ENCODE measurements at regions of chr11 and their contacts with region 1.

Region 1: GRCh38 chr11:76807206-76807875 is 24.2 kb downstream of the TSKU start:
- DNase-seq: peak; percentile 56 to 78
- H3K4me3 ChIP-seq: peak overlapping the region; percentile 12; the same call in 1 of the 2 replicates
- H3K27ac ChIP-seq: no peak overlapping the region
- H3K4me1 ChIP-seq: peaks cover 15% of the 10 kb centered on the region
- H3K27me3 ChIP-seq: no peaks in the 10 kb centered on the region
- CTCF ChIP-seq: peak; percentile 89

Region 2: DNA sequence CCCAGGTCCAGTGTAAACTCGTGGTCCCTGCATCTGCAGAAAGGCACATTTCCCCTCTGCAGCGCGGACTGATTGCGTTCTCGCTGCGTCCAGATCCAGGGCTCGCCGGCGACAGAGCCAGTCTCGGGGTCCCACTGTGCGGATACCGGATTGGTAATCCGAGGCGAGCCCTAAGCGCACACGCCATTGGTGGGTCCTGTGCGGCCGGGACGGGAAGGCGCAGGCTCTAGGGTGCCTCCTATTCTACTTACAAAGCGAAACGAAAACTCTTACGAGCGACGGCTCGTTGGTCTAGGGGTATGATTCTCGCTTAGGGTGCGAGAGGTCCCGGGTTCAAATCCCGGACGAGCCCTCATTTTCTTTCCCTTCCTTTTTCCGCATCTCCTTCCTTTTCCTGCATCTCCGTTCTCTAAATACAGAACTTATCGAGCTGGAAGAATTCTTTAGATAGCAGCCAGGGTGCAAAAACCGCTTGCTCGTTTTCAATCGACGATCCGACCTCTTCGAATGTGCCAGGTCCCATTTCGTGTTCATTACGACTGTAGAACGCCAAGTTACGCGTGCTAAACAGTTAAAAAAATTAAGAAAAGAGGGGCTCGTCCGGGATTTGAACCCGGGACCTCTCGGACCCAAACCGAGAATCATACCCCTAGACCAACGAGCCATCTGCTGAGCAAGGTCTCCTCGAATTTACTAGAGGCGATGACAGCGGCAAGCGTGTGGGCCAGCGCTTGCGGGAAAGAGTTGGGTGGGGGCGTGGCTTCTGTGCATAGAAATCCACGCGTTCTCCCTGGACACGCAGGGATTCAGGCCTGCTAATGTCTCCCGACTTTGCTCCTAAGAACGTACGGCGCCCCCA is 571.9 kb before region 1 on chr11:
- CTCF ChIA-PET with region 1: interaction called, 16 read pairs
- POLR2A ChIA-PET with region 1: no interaction called
- intact Hi-C with region 1: no loop called
- DNase-seq: peak; percentile 86 to 92
- H3K4me3 ChIP-seq: peak overlapping the region; percentile 66
- H3K27ac ChIP-seq: peak overlapping the region; percentile 48
- H3K4me1 ChIP-seq: peaks cover 14% of the 10 kb centered on the region
- H3K27me3 ChIP-seq: no peaks in the 10 kb centered on the region
- CTCF ChIP-seq: no peak

Region 3: GRCh38 chr11:76734456-76735420 is 72.6 kb before region 1 on chr11:
- CTCF ChIA-PET with region 1: interaction called, 6 read pairs
- POLR2A ChIA-PET with region 1: no interaction called
- intact Hi-C with region 1: loop called (anchors 1 kb)
- DNase-seq: no peak
- H3K4me3 ChIP-seq: no peak overlapping the region
- H3K27ac ChIP-seq: no peak overlapping the region
- H3K4me1 ChIP-seq: no peaks in the 10 kb centered on the region
- H3K27me3 ChIP-seq: no peaks in the 10 kb centered on the region
- CTCF ChIP-seq: no peak

Region 4: DNA sequence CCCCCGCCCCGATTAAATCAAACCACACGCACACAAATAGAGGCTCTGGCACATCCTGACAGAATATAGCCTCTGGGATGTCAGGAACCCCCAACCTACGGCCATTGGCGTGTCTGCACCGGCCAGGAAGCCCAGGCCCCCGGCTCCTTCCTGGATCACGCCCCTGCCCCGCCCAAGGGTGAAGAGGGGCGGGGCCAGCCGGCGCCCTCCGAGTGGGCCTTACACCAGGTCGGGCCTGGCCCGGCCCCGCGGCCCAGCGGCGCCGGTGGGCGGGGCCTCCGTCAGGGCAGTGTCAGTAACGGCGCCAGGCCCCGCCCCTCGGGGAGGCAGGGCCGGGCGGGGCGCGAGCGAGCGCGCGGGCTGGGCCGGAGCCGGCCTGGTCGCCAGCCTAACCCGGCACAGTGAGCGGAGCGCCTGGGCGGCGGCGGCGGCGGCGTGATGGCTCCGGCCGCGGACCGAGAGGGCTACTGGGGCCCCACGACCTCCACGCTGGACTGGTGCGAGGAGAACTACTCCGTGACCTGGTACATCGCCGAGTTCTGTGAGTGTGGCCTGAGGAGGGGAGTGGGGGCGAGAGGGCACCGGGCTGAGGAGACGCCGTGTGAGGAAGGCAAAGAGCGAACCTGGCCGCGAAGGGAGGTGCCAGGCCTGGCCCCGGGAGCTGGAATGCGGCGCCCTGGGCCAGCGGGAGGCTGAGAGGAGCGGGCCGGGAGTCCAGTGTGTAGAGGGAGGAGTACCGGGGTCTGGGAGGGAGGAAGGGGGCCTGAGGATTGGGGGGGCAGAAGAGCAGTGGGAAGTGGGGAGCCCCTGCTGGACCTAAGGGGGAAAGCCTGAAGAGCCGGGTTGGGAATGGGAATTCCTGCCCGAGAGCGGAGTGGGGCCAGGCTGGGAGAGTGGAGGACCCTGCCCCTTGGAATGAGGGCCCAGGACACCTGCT is 53.5 kb after region 1 on chr11 and contains the start of gene ACER3:
- CTCF ChIA-PET with region 1: no interaction called
- POLR2A ChIA-PET with region 1: interaction called, 5 read pairs
- intact Hi-C with region 1: loop called (anchors 5 kb)
- DNase-seq: peak; percentile 69 to 96
- H3K4me3 ChIP-seq: peak within 1 kb of the TSS; percentile 94
- H3K27ac ChIP-seq: no peak within 1 kb of the TSS
- H3K4me1 ChIP-seq: peaks cover 20% of the 10 kb centered on the region
- H3K27me3 ChIP-seq: no peaks in the 10 kb centered on the region
- CTCF ChIP-seq: peak; percentile 45; the same call in 1 of the 2 replicates
- total RNA-seq, gene ACER3: 15.8 and 21.3 TPM in 2 replicates

Region 5: DNA sequence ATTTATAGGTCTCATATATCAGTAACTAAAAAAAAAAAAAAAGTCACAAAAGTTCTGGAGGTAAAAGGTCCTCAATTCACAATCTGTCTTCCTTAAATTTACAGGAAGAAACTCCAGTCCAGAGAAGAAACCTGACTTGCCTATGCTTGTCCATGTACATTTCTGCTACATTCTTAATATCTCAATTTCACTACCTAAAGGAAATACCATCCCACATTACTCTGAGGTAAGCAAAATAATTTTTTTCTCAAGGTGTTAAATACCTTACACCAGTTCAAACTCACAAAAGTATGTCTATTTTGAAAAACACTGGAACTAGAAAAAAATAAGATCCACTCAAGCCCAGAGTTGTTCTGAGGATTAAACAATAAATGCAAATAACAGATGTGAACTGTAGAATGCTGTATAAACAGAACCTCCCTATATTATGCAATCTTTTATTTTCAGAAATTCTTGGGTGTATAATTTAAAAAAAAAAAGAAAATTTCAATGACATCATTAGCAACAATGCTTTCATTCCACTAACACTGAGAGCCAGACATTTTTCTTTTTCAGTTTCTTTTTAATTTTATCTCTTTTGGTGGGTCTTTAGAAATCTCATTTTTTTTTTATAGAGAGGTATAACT is 544.1 kb after region 1 on chr11:
- CTCF ChIA-PET with region 1: interaction called, 15 read pairs
- POLR2A ChIA-PET with region 1: no interaction called
- intact Hi-C with region 1: no loop called
- DNase-seq: no peak
- H3K4me3 ChIP-seq: no peak overlapping the region
- H3K27ac ChIP-seq: no peak overlapping the region
- H3K4me1 ChIP-seq: no peaks in the 10 kb centered on the region
- H3K27me3 ChIP-seq: no peaks in the 10 kb centered on the region
- CTCF ChIP-seq: no peak